Activated CD4-positive, alpha-beta memory T cell treated with anti-CD3 and anti-CD28 coated beads, Interleukin-2, amount 10 ng/mL, durations not matched to agents 7 days and 5 days (primary cell): ENCODE measurements at regions of chr2 and their contacts with region 1.

Region 1: GRCh38 chr2:219057709-219058540 is 2.8 kb downstream of the IHH start:
- DNase-seq: peak; percentile 78
- H3K4me3 Mint-ChIP-seq: no peak overlapping the region
- H3K27ac Mint-ChIP-seq: no peak overlapping the region
- H3K4me1 Mint-ChIP-seq: peaks cover 18% of the 10 kb centered on the region
- H3K27me3 Mint-ChIP-seq: peaks cover 63% of the 10 kb centered on the region

Region 2: DNA sequence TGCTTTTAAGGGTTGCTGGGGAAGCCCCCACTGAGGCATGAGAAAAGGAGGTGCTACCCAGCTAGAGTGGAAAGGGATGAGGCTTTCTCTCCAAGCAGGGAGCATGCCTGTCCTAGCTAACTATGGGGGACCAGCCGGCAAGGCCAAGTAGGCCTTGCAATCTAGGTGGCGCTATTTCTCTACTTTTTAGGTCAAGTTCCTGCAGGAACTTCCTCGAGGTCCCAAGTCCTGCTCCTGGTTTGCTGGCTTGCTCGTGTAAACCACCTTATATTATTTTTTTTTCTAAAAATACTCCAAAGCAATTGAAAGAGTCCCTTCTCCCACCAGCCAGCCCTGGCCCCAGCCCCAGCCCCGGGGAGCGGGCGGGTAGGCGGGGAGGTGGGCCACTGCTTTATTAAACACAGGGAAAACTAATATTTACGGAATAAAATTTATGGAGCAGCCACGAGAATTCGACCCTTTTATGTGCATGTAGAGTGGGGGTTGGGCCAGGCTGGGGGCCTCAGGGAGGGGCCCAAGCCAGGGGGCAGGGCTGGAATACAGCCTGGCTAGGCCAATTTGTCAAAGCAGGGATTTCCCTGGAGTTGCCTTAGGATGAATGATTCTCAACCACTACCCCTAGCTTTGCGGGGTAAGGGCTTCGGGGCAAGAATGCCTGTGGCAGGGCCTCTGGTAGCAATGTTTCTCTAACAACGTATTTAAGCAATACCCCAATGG is 15.6 kb after region 1 on chr2:
- CTCF ChIA-PET with region 1: interaction called, 22 read pairs
- POLR2A ChIA-PET with region 1: interaction called, 3 read pairs
- DNase-seq: no peak
- H3K4me3 Mint-ChIP-seq: no peak overlapping the region
- H3K27ac Mint-ChIP-seq: no peak overlapping the region
- H3K4me1 Mint-ChIP-seq: no peaks in the 10 kb centered on the region
- H3K27me3 Mint-ChIP-seq: no peaks in the 10 kb centered on the region

Region 3: GRCh38 chr2:219155054-219155644 is 97.2 kb after region 1 on chr2:
- CTCF ChIA-PET with region 1: interaction called, 54 read pairs
- POLR2A ChIA-PET with region 1: no interaction called
- DNase-seq: peak; percentile 27
- H3K4me3 Mint-ChIP-seq: no peak overlapping the region
- H3K27ac Mint-ChIP-seq: no peak overlapping the region
- H3K4me1 Mint-ChIP-seq: peaks cover 9% of the 10 kb centered on the region
- H3K27me3 Mint-ChIP-seq: no peaks in the 10 kb centered on the region